Activated naive CD4-positive, alpha-beta T cell treated with anti-CD3 and anti-CD28 coated beads for 36 hours (primary cell): ENCODE measurements at regions of chr7 and their contacts with region 1.

Region 1: DNA sequence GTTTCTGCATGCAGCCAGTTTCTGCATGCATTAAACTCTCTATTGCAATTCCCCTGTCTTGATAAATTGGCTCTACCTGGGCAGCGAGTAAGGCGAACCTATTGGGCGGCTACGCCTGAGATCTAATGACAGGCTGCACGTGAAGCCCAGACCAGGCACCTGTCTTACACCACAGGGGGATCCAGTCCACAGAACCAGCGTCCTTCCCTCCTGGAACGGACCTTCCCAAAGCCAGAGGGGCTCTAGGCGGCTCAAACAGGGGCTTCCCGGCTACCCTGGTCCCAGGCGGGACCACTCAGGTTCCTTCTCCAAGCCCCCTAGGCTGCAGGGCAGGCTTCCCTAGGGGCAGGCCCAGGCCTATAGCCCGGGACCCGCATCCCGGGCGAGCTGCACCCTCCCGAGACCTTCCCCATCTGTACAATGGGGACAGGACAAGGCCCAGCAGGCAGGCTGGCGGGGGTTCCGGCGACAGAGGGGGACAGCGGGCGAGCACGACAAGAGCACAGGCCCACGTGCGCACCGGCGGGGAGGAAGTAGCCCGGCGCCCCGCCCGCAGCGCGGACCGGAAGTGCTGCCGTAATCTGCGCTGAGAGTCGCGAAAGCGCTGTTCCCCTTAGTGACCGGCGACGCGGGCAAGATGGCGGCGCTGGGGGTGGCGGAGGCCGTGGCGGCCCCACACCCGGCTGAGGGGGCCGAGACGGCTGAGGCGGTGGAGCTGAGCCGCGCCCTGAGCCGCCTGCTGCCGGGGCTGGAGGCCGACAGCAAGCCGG is at the start of gene DNAAF5:
- DNase-seq: peak; percentile 88
- H3K4me3 Mint-ChIP-seq: peak within 1 kb of the TSS; percentile 84
- H3K27ac Mint-ChIP-seq: peak within 1 kb of the TSS; percentile 65
- H3K4me1 Mint-ChIP-seq: peaks cover 31% of the 10 kb centered on the region
- H3K27me3 Mint-ChIP-seq: no peaks in the 10 kb centered on the region
- total RNA-seq, gene DNAAF5: 26.2 to 27.5 TPM

Region 2: DNA sequence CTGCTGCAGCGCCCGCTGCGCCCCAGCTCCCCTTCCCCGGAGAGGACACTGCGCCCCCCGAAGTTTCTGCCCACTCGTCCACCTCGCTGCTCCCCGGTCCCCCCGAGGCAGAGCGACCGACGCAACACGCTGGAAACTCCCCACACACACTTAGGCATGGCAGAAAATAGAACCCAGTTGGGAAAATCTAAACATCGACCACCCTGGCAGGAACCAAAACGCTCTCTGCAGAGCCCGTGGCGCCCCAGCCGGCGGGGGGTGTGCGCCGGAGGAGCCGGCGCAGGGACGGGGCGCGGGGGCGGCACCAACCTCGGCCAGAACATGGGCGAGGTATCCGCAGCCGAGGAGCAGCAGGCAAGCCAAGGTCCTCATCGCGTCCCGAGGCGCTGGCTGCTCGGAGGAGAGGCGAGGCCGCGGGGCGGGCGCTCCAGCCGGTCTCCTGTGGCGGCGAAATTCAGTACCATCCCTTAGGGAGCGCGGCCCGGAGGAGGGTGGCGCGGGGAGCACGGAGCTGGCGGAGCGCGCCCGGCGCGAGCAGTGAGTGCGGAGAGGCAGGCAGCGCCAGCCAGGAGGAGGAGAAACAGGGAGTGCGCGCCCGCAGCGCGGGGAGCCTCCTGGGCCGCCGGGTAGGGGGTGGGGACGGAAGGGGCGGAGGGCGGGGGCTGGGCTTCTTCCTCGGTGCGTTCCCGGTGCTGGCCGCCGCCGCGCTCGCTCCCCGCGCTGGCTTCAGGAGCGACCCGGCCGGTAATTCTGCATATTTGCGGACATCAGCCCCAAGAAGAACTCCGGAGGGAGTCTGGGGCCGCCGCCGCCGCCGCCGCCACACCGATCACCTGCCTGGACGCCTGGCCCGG is 207.4 kb before region 1 on chr7:
- CTCF ChIA-PET with region 1: no interaction called
- intact Hi-C with region 1: loop called (anchors 2 kb)
- DNase-seq: peak; percentile 75
- H3K4me3 Mint-ChIP-seq: peak overlapping the region; percentile 81
- H3K27ac Mint-ChIP-seq: no peak overlapping the region
- H3K4me1 Mint-ChIP-seq: peaks cover 20% of the 10 kb centered on the region
- H3K27me3 Mint-ChIP-seq: peaks cover 33% of the 10 kb centered on the region

Region 3: GRCh38 chr7:552868-553635 is 173.2 kb before region 1 on chr7:
- CTCF ChIA-PET with region 1: no interaction called
- intact Hi-C with region 1: no loop called
- DNase-seq: no peak
- H3K4me3 Mint-ChIP-seq: no peak overlapping the region
- H3K27ac Mint-ChIP-seq: no peak overlapping the region
- H3K4me1 Mint-ChIP-seq: no peaks in the 10 kb centered on the region
- H3K27me3 Mint-ChIP-seq: no peaks in the 10 kb centered on the region

Region 4: DNA sequence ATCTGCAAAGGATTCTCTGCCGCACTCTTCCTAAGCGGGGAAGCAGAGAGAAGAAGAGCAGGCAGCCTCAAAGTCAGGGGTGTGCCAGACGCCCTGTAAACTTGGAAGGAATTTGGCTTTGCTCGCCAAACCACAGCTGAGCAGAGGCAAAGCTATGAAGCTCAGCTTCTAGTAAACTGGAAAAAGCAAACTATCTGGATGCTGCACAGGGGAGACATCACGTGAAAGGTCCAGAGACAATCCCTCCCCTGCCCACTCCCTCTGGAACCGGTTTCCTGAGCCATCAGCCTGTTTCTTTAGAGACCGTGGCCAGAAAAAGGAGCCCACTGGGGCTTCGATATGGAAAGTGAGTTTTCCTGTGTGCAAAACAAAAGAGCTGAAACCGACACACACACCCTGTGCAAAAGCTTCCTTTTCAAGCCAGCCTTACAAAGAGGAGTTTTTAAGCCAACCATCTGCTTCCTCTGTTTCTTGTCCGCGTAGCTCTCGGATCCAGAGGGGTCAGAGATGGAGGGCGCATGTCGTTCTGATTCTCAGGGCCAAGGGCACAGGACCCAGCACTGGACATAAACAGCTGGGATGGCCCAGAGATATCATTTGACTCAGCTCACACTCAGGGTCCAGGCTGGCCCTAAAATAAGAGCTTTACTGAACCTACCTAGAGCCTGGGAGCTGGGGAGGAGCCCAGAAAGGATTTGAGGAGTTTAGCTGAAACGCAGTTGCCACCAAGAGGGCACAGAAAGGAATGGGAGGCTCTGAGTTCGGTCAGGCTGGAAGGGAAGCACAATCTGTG is 57.9 kb before region 1 on chr7:
- CTCF ChIA-PET with region 1: interaction called, 3 read pairs
- intact Hi-C with region 1: loop called (anchors 10 kb)
- DNase-seq: no peak
- H3K4me3 Mint-ChIP-seq: peak overlapping the region; percentile 9
- H3K27ac Mint-ChIP-seq: no peak overlapping the region
- H3K4me1 Mint-ChIP-seq: no peaks in the 10 kb centered on the region
- H3K27me3 Mint-ChIP-seq: no peaks in the 10 kb centered on the region